ENCODE measurements at regions of chr3 and their contacts with region 1.

Region 1: DNA sequence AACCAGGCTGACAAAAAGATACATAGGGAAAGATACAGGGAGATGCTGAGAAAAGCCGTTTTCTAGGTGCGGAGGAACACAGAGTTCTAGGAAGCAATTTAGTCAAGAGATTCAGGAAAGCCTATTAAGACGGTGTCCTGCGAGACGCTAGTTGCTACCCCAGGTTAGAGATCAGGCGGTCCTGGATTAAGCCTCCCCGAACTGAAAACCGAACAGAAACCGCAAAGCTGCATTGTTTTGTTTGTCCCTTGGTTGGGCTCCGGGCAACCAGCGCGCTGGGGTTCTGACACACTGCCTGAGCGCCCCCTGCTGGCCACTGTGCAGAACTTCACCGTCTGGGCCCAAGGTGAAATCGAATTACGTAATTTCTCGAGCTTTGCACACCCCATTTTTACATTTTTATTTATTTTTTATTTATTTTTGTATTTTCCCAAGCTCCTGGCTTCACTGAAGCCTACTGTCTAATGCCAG is 37.3 kb upstream of the NDUFB4 start:
- DNase-seq: peak; percentile 81 to 93 (median 89)
- ATAC-seq: peak; percentile 90
- H3K4me3 ChIP-seq: peak overlapping the region; percentile 33 to 46
- H3K4me3 Mint-ChIP-seq: peak overlapping the region; percentile 83
- H3K27ac ChIP-seq: peak overlapping the region; percentile 14 to 25
- H3K27ac Mint-ChIP-seq: peak overlapping the region; percentile 50
- H3K4me1 ChIP-seq: peaks cover 5% of the 10 kb centered on the region
- H3K4me1 Mint-ChIP-seq: peaks cover 16% of the 10 kb centered on the region
- H3K27me3 ChIP-seq: no peaks in the 10 kb centered on the region
- H3K27me3 Mint-ChIP-seq: peaks cover 5% of the 10 kb centered on the region
- CTCF ChIP-seq: peak; percentile 93

Region 2: DNA sequence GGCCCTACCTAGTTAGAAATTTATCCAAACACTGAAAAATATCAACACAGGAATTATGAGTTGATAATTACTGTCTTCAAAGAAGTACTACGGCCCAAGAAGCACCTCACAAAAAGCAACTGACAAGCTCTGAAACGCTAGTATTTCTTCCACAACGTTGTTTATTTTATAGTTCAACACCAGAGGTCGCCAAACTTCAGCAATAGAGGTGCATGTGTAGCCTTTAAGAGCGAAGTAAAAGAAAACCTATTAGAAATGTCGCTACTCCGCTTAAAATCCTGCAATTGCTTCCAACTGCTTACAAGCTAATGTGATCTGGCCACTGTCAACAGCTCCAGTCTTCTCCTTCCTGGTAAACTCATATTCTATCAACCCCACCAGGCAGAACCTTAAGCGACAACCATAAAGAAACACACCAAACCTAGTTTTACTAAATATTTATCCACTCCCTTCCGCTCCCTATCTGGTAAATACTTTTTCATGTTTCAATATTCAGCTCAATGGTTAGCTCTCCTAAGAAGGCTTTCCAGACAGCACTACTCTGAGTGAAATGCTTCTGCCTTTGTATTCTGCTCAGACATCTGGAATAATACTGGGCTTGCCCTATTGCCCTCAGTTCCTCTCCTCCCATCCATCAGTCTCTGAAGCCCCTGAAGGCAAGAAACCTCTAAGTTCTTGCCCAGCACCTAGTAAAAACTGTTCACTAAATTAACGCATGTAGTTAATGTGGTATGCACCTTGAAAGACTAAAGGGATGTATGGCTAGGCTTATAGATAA is 666.7 kb before region 1 on chr3:
- CTCF ChIA-PET with region 1: interaction called, 4 read pairs
- POLR2A ChIA-PET with region 1: no interaction called
- intact Hi-C with region 1: loop called (anchors 1 to 2 kb)
- DNase-seq: peak in 8 of 9 experiments; percentile 10 to 76 (median 42)
- ATAC-seq: peak; percentile 68
- H3K4me3 ChIP-seq: no peak overlapping the region
- H3K4me3 Mint-ChIP-seq: no peak overlapping the region
- H3K27ac ChIP-seq: no peak overlapping the region
- H3K27ac Mint-ChIP-seq: no peak overlapping the region
- H3K4me1 ChIP-seq: peaks cover 3% of the 10 kb centered on the region
- H3K4me1 Mint-ChIP-seq: peaks cover 11% of the 10 kb centered on the region
- H3K27me3 ChIP-seq: no peaks in the 10 kb centered on the region
- H3K27me3 Mint-ChIP-seq: no peaks in the 10 kb centered on the region
- CTCF ChIP-seq: peak; percentile 85

Region 3: DNA sequence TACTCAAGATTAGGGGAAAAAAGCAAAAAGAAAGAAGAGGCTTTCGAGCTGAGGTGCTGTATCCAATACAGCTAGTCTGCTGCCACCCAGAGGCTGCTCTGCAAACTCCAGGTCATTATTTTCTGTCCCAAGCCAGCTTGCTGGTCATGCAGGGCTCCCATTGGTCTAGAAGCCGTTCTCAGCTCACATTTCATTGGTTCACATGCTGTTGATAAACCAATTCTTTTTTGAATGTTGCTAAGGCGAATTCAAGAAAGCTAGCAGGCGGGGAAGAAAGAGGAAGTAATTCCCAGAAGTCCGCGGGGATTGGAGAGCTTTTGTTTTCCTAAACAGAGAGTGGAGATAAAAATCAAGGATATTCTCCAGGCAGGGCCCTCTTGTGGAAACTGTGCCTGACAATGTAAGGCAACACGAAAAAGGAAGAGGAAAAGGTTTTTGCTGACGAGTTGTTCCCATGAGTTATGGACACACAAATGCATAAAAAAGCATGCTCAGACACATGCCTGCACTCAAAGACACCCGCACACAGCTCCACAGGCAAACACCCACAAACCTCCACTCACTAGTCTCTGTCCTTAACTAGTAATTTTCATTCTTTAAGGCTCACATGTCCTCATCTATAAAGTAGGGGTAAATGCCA is 141.4 kb before region 1 on chr3:
- CTCF ChIA-PET with region 1: interaction called, 20 read pairs
- POLR2A ChIA-PET with region 1: no interaction called
- intact Hi-C with region 1: loop called (anchors 1 to 5 kb)
- DNase-seq: peak; percentile 66 to 90 (median 80)
- ATAC-seq: peak; percentile 99
- H3K4me3 ChIP-seq: peak overlapping the region; percentile 47 to 55
- H3K4me3 Mint-ChIP-seq: peak overlapping the region; percentile 84
- H3K27ac ChIP-seq: no peak overlapping the region
- H3K27ac Mint-ChIP-seq: no peak overlapping the region
- H3K4me1 ChIP-seq: no peaks in the 10 kb centered on the region
- H3K4me1 Mint-ChIP-seq: peaks cover 21% of the 10 kb centered on the region
- H3K27me3 ChIP-seq: no peaks in the 10 kb centered on the region
- H3K27me3 Mint-ChIP-seq: peaks cover 4% of the 10 kb centered on the region
- CTCF ChIP-seq: peak; percentile 87

Region 4: GRCh38 chr3:120596116-120596852 is 37.5 kb after region 1 on chr3 and contains the start of gene NDUFB4:
- CTCF ChIA-PET with region 1: interaction called, 26 read pairs
- POLR2A ChIA-PET with region 1: interaction called, 3 read pairs
- intact Hi-C with region 1: loop called (anchors 2 kb)
- DNase-seq: peak; percentile 87 to 99 (median 95)
- ATAC-seq: peak; percentile 92
- H3K4me3 ChIP-seq: peak within 1 kb of the TSS; percentile 77 to 92
- H3K4me3 Mint-ChIP-seq: peak within 1 kb of the TSS; percentile 94
- H3K27ac ChIP-seq: peak within 1 kb of the TSS; percentile 91 to 95
- H3K27ac Mint-ChIP-seq: peak within 1 kb of the TSS; percentile 97
- H3K4me1 ChIP-seq: peaks cover 34% of the 10 kb centered on the region
- H3K4me1 Mint-ChIP-seq: peaks cover 12% of the 10 kb centered on the region
- H3K27me3 ChIP-seq: no peaks in the 10 kb centered on the region
- H3K27me3 Mint-ChIP-seq: no peaks in the 10 kb centered on the region
- CTCF ChIP-seq: no peak
- total RNA-seq, gene NDUFB4: 63.2 to 71.5 TPM

Region 5: GRCh38 chr3:120742198-120742849 is 183.5 kb after region 1 on chr3 and contains the starts of genes GTF2E1 and RABL3:
- CTCF ChIA-PET with region 1: interaction called, 12 read pairs
- POLR2A ChIA-PET with region 1: interaction called, 3 read pairs
- intact Hi-C with region 1: loop called in 1 of 2 experiments (anchors 1 kb)
- DNase-seq: peak; percentile 93 to 99 (median 97)
- ATAC-seq: peak; percentile 96
- H3K4me3 ChIP-seq: peak within 1 kb of the TSS; percentile 89 to 90
- H3K4me3 Mint-ChIP-seq: peak within 1 kb of the TSS; percentile 94
- H3K27ac ChIP-seq: peak within 1 kb of the TSS; percentile 97 to 98
- H3K27ac Mint-ChIP-seq: peak within 1 kb of the TSS; percentile 98
- H3K4me1 ChIP-seq: peaks cover 16% of the 10 kb centered on the region
- H3K4me1 Mint-ChIP-seq: peaks cover 49% of the 10 kb centered on the region
- H3K27me3 ChIP-seq: no peaks in the 10 kb centered on the region
- H3K27me3 Mint-ChIP-seq: no peaks in the 10 kb centered on the region
- CTCF ChIP-seq: no peak
- total RNA-seq, gene GTF2E1: 5.8 to 7.8 TPM
- total RNA-seq, gene RABL3: 14.0 to 15.2 TPM

Region 6: GRCh38 chr3:120795017-120795648 is 236.3 kb after region 1 on chr3:
- CTCF ChIA-PET with region 1: interaction called, 166 read pairs
- POLR2A ChIA-PET with region 1: interaction called, 4 read pairs
- intact Hi-C with region 1: loop called (anchors 1 kb)
- DNase-seq: peak; percentile 71 to 93 (median 80)
- ATAC-seq: peak; percentile 96
- H3K4me3 ChIP-seq: no peak overlapping the region
- H3K4me3 Mint-ChIP-seq: no peak overlapping the region
- H3K27ac ChIP-seq: no peak overlapping the region
- H3K27ac Mint-ChIP-seq: no peak overlapping the region
- H3K4me1 ChIP-seq: peaks cover 6% of the 10 kb centered on the region
- H3K4me1 Mint-ChIP-seq: peaks cover 12% of the 10 kb centered on the region
- H3K27me3 ChIP-seq: no peaks in the 10 kb centered on the region
- H3K27me3 Mint-ChIP-seq: no peaks in the 10 kb centered on the region
- CTCF ChIP-seq: peak; percentile 85